ENCODE measurements at regions of chr9 and their contacts with region 1.

Region 1: GRCh38 chr9:82606492-82607382 is 456.2 kb downstream of the RASEF start:
- DNase-seq: peak; percentile 74
- H3K4me3 ChIP-seq: no peak overlapping the region
- H3K27ac ChIP-seq: no peak overlapping the region
- H3K4me1 ChIP-seq: 0 out of 2 replicates have a peak, but pooled peaks cover 6% of the 10 kb centered on the region
- H3K27me3 ChIP-seq: peaks cover 25% of the 10 kb centered on the region

Region 2: DNA sequence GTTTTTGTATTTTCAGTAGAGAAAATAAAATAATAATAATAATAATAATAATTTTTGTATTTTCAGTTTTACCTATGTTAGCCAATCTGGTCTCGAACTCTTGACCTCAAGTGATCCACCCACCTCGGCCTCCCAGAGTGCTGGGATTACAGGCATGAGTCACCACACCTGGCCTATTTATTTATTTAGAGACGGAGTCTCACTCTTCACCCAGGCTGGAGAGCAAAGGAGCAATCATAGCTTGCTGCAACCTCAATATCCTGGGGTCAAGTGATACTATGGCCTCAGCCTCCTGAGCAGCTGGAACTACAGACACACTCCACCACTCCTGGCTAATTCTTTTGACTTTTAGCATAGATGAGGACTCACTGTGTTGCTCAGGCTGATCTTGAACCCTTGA is 1084.8 kb before region 1 on chr9:
- in situ Hi-C with region 1: loop called (anchors 25 kb)
- DNase-seq: no peak
- H3K4me3 ChIP-seq: no peak overlapping the region
- H3K27ac ChIP-seq: no peak overlapping the region
- H3K4me1 ChIP-seq: no peaks in the 10 kb centered on the region
- H3K27me3 ChIP-seq: peaks cover 2% of the 10 kb centered on the region; the same call in 1 of the 2 replicates

Region 3: DNA sequence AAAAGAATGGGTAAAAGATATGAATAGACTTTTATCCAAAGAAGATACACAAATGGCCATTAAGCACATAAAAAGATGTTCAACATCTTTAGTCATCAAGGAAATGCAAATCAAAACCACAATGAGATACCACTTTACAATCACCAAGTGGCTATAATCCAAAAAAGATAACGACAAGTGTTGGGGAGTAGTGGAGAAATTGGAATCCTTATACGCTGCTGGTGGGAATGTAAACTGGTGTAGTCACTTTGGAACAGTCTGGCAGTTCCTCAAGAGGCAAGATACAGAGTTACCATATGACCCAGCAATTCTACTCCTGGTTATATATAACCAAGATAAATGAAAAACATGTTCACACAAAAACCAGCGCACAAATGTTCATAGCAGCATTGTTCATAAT is 383.3 kb before region 1 on chr9:
- in situ Hi-C with region 1: no loop called
- DNase-seq: no peak
- H3K4me3 ChIP-seq: no peak overlapping the region
- H3K27ac ChIP-seq: no peak overlapping the region
- H3K4me1 ChIP-seq: no peaks in the 10 kb centered on the region
- H3K27me3 ChIP-seq: no peaks in the 10 kb centered on the region; the same call in none of the 2 replicates

Region 4: DNA sequence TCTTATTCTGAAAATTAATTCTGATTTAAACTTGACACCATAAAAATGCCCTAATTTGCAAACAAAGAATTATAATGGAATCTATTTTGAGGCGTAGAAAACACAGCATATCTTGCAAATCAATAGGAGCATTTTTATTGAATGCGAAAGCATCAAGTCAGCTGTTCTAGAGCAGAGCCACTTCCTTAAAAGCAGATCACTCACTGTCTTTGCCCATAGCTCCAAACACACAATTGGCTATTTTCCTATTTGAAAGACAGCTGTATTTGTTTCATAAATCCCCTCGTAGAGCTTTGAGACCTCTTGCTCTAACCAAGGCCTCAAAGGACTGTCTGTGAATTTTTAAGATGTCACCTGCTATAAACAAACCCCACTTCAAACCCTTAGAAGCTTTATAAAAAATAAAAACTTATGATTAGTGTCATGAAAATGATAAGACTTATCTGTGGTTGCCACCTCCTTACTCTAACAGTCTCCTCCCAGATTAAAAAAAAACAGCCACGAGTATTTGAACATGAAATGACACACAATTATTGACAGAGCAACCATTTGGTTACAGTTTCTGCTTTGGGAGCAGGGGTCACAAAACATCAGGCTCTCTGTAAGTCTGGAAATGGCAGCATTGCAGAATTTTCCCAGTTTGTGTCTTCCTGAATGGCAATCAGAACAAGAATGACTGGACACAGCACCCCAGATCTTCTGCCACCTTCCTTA is 531.8 kb after region 1 on chr9:
- in situ Hi-C with region 1: no loop called
- DNase-seq: no peak
- H3K4me3 ChIP-seq: no peak overlapping the region
- H3K27ac ChIP-seq: no peak overlapping the region
- H3K4me1 ChIP-seq: no peaks in the 10 kb centered on the region
- H3K27me3 ChIP-seq: no peaks in the 10 kb centered on the region; the same call in 1 of the 2 replicates